ENCODE measurements at regions of chr20 and their contacts with region 1.

Region 1: GRCh38 chr20:35092524-35093266 is at the start of gene TRPC4AP:
- DNase-seq: peak; percentile 44
- H3K4me3 ChIP-seq: peak within 1 kb of the TSS; percentile 88
- H3K27me3 ChIP-seq: no peaks in the 10 kb centered on the region
- CTCF ChIP-seq: peak; percentile 77
- polyA plus RNA-seq, gene TRPC4AP: 95.9 and 111 TPM in 2 replicates

Region 2: DNA sequence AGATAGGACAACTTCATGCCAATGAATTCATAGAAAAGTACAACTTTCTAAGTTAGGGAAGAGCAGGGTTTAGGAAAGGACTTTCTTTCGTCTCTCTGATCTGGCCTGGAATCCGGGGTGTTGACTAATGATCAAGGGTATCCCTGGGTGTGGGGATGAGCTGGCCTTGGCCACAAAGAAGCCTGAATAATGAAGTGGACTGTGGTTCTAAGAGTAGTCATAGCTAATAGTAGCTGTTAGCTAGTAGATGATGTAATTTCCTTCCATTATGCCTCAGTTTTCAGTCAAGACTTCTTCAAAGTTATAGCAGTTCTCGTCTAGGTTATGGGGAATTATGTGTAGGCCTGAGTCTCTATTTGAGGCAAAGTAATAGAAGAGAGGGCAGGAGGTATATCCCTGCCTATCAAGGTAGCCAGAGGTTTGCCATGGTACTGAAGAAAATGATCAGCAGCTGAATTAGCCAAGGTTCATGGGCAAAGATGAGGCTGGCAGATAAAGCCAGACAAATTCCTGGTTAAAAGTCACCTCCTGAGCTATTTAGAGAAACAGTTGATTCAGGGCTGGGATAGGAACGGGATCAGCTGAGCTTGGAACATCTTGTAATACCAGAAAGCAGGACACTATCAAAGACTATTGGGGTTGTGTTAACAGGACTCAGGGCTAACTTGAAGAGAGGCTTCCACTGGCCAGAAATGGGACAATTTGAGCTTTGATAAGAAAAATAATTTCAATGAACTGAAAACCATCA is 18.6 kb after region 1 on chr20:
- CTCF ChIA-PET with region 1: interaction called, 20 read pairs
- POLR2A ChIA-PET with region 1: no interaction called
- DNase-seq: peak; percentile 55
- H3K4me3 ChIP-seq: no peak overlapping the region
- H3K27me3 ChIP-seq: no peaks in the 10 kb centered on the region
- CTCF ChIP-seq: no peak

Region 3: GRCh38 chr20:35146920-35147574 is 54.4 kb after region 1 on chr20 and contains the start of gene EDEM2:
- CTCF ChIA-PET with region 1: interaction called, 16 read pairs
- POLR2A ChIA-PET with region 1: no interaction called
- DNase-seq: peak; percentile 83
- H3K4me3 ChIP-seq: peak within 1 kb of the TSS; percentile 80
- H3K27me3 ChIP-seq: no peaks in the 10 kb centered on the region
- CTCF ChIP-seq: no peak
- polyA plus RNA-seq, gene EDEM2: 17.7 and 24.7 TPM in 2 replicates

Region 4: GRCh38 chr20:35207950-35208611 is 115.4 kb after region 1 on chr20:
- CTCF ChIA-PET with region 1: interaction called, 61 read pairs
- POLR2A ChIA-PET with region 1: no interaction called
- DNase-seq: no peak
- H3K4me3 ChIP-seq: no peak overlapping the region
- H3K27me3 ChIP-seq: no peaks in the 10 kb centered on the region
- CTCF ChIP-seq: peak; percentile 74

Region 5: DNA sequence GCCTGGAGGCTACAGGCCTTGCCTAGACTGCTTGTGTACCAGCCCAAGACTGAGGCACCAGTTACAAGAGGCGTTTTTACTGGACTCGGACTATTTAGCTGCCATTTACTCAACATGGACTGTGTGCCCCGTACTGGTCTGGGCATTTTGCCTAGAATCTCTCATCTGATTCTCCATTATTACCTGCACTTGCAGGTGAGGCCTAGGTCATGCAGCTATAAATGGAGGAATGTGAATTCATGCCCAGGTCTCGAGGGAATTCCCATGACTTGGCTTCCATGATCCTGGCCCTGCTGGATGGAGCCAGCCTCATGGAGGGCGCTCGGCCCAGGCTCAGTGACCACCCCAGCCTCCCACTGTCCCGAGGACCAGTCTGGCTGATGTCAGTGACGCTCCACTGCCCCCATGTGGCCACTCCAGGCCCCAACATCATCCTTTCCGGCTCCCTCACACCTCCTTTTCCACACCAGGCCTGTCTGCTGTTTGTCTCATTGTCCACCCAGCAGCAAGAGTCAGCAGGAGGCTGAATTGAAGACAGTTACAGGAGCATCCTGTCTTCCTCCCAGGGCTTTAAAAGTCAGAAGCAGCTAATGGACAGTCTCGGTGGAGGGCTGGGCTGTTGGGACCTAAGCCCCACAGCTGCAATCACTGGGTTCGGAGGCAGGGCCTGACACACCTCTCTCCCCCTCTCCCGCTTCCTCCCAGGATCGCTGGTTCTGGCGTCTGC is 176.5 kb after region 1 on chr20:
- CTCF ChIA-PET with region 1: interaction called, 27 read pairs
- POLR2A ChIA-PET with region 1: no interaction called
- DNase-seq: no peak
- H3K4me3 ChIP-seq: no peak overlapping the region
- H3K27me3 ChIP-seq: no peaks in the 10 kb centered on the region
- CTCF ChIP-seq: peak; percentile 89

Measured in BJ (cell line).